HEK293T (cell line): ENCODE measurements at regions of chr6 and their contacts with region 1.

Region 1: DNA sequence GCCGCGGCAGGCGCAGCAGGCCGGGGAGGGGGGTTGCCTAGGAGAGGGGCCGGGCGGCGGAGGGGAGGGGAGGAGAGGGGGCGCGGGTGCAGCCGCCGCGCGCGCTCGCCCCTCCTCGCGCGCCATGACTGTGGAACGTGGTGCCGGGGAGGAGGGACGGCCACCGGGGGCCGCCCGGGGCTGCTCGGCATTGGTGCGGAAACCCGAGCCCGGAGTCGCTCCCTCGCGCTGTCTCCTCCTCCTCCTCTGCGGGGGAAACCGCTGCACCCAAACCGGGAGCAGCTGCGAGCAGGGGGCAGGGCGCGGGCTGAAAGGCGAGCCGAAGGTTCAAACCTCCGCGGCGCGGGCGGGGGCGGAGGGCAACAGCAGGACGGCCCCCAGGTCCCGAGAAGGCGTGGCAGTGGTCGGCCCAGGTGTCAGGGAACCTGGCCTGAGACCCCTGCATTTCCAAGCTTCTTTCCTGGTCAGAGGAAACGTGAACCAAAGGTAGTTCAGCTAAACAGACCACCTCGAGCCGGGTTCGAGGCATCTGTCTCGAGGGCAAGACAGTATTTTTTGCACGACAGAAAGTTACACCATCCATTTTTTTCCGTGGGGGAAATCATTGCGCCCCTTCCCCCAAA is 1.4 kb upstream of the TRERF1 start:
- DNase-seq: peak; percentile 85

Region 2: DNA sequence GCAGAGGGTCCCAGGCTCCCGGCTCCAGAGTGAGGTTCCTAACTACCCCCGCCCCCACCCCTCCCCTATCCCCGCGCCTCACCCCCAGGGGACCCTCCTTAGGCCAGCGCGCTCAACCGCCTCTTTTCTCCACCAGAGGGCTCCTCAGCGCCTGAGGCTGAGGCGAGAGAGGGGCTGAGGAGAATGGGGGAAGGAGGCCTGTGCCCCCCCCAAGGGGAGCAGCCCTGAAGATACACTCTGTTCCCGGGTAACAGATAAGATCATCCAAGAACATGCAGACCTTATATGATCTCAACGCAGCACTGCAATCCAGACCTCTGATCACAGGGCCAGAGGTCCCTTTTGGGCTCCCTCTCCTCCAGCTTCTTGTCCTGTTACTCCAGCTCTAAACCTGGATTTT is 192.2 kb before region 1 on chr6:
- CTCF ChIA-PET with region 1: interaction called, 3 read pairs
- POLR2A ChIA-PET with region 1: interaction called, 17 read pairs
- DNase-seq: peak; percentile 67

Region 3: GRCh38 chr6:42441697-42442081 is 11.5 kb before region 1 on chr6:
- CTCF ChIA-PET with region 1: no interaction called
- POLR2A ChIA-PET with region 1: interaction called, 18 read pairs
- DNase-seq: no peak

Region 4: DNA sequence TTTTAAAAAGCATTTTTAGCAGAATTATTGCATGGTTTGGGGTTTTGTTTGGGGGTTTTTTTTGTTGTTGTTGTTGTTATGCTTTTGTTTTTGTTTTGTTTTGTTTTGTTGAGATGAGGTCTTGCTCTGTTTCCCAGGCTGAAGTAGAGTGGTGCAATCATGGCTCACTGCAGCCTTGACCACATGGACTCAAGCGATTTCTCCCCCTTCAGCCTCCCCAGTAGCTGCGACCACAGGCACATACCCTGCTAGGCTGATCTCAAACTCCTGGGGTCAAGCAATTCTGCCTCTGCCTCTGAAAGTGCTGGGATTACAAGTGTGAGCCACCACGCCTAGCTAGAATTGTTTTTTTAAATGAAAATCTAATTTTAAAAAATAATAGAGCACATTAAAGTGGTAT is 146.4 kb after region 1 on chr6:
- CTCF ChIA-PET with region 1: no interaction called
- POLR2A ChIA-PET with region 1: no interaction called
- DNase-seq: no peak

Region 5: DNA sequence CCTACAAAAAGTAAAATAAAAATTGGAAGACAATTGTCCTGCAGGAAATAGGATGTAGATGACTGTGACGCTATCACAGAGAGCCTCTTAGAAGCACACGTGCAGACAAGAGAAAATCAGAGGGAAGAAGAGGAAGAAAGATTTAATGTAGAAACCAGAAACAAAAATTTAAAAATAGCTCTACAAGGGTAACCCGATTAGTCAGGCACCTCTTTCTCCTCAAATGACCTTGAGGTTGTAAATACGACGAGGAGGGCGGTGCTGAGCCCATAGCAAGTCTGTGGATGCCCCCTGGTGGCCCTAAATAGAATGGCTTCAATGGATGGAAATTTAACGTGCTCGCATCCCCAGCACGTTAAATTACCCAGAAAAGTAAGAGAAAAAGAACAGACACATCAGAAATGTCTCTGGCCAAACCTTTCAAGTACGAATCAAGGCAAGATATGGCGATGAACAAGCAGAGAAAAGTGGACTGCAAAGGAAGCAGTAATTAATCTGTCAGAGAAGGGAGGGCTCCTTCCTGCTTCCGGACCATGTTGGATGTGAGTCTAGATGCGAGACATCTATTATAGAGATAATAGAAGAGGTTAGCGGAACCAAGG is 273.4 kb after region 1 on chr6:
- CTCF ChIA-PET with region 1: no interaction called
- POLR2A ChIA-PET with region 1: no interaction called
- DNase-seq: peak; percentile 76